ENCODE measurements at regions of chr5 and their contacts with region 1.

Region 1: GRCh38 chr5:142296914-142297417 is 27.9 kb downstream of the SPRY4 start:
- DNase-seq: no peak
- ATAC-seq: no peak; the same call in 2 of the 3 replicates
- H3K4me3 ChIP-seq: no peak overlapping the region
- H3K27ac ChIP-seq: peak overlapping the region; percentile 62; the same call in 1 of the 3 replicates
- H3K4me1 ChIP-seq: peaks cover 7 to 26% of the 10 kb centered on the region in 2 experiments; a peak in 3 of 5 replicates
- H3K27me3 ChIP-seq: no peaks in the 10 kb centered on the region
- CTCF ChIP-seq: no peak
- EP300 ChIP-seq: no peak
- POLR2A ChIP-seq: no peak
- RAD21 ChIP-seq: no peak

Region 2: DNA sequence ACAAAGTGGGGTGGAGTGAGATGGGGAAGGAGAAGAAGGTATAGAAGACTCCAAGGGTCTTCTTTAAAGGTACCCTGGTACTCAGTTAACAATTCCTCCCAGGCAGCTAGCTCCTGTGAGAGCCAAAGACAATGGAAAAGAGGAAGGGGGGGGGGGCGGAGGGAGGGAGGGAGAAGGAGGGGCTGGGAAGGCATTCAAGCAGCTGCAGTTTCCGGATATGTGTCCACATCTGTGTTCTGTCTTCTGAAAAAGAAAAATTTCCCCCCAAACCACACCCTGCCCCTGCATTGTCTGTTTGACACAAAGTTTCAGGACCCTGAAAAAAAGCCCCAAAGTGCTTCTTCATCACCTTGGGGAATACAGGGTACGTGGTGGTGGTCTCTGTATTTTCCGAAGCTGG is 16.7 kb after region 1 on chr5:
- CTCF ChIA-PET with region 1: no interaction called
- POLR2A ChIA-PET with region 1: interaction called, 38 read pairs
- in situ Hi-C with region 1: no loop called
- intact Hi-C with region 1: no loop called
- DNase-seq: no peak
- ATAC-seq: no peak
- H3K4me3 ChIP-seq: no peak overlapping the region
- H3K27ac ChIP-seq: no peak overlapping the region
- H3K4me1 ChIP-seq: peaks cover 0 to 6% of the 10 kb centered on the region in 2 experiments; a peak in 1 of 5 replicates
- H3K27me3 ChIP-seq: no peaks in the 10 kb centered on the region
- CTCF ChIP-seq: no peak
- EP300 ChIP-seq: no peak
- POLR2A ChIP-seq: no peak
- RAD21 ChIP-seq: no peak

Measured in K562 (cell line).